ENCODE measurements at regions of chr21 and their contacts with region 1.

Region 1: DNA sequence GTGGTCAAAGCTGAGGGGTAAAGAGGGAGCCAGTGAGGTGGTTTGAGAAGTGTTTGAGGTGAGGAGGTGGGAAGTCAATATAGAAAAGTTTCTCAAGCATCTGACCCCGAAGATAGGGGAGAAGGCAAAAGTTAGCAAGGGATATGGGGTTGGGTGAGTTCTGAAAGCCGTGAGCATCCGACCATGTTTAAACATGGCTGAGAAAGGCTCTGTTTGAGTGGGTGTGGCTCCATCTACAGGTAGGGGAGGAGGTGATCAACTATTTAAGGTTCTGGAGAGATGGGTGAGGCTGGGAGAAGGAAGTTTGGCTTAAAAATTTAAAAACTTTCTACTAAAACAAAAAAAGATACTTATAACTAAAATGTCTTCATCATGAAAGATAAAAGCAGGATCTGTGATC is 273.8 kb downstream of the KCNJ6 start:
- DNase-seq: no peak
- ATAC-seq: peak; percentile 71 to 92 (median 82)
- H3K4me3 ChIP-seq: no peak overlapping the region
- H3K27ac ChIP-seq: no peak overlapping the region
- H3K4me1 ChIP-seq: no peaks in the 10 kb centered on the region
- H3K27me3 ChIP-seq: no peaks in the 10 kb centered on the region
- CTCF ChIP-seq: peak; percentile 41

Region 2: DNA sequence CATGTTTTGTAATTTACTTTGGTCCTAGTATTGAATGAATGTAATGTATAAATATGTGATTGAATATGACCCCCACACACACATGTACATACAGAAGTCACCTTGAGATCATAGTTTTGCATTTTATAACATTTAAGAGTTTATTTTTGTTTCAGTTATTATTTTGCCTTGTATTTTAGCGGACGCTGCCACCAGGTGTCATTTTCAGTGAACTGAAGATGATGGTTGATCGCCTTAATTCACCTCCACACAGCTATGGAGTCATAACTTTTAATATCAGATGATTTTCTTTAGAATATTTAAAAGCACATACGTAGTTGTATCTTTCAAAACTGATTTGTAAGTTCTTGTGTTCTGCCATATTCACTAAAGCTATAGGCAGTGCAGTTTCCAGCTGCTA is 145.5 kb before region 1 on chr21:
- intact Hi-C with region 1: loop called in 1 of 2 experiments (anchors 10 kb)
- DNase-seq: no peak
- ATAC-seq: peak in 2 of 4 donors; percentile 54 to 66
- H3K4me3 ChIP-seq: no peak overlapping the region
- H3K27ac ChIP-seq: peak overlapping the region; percentile 25
- H3K4me1 ChIP-seq: peaks cover 17% of the 10 kb centered on the region
- H3K27me3 ChIP-seq: no peaks in the 10 kb centered on the region
- CTCF ChIP-seq: peak; percentile 33

Measured in psoas muscle (tissue), 8 donors.